ENCODE measurements at regions of chr10 and their contacts with region 1.

Region 1: GRCh38 chr10:6108603-6109443 is 20.0 kb downstream of the RBM17 start:
- DNase-seq: no peak
- H3K4me3 ChIP-seq: no peak overlapping the region
- H3K27ac ChIP-seq: peak overlapping the region in 1 of 2 donors; percentile 50
- H3K4me1 ChIP-seq: no peaks in the 10 kb centered on the region
- H3K27me3 ChIP-seq: no peaks in the 10 kb centered on the region
- CTCF ChIP-seq: peak; percentile 35 to 82 (median 75)
- POLR2A ChIP-seq: no peak

Region 2: DNA sequence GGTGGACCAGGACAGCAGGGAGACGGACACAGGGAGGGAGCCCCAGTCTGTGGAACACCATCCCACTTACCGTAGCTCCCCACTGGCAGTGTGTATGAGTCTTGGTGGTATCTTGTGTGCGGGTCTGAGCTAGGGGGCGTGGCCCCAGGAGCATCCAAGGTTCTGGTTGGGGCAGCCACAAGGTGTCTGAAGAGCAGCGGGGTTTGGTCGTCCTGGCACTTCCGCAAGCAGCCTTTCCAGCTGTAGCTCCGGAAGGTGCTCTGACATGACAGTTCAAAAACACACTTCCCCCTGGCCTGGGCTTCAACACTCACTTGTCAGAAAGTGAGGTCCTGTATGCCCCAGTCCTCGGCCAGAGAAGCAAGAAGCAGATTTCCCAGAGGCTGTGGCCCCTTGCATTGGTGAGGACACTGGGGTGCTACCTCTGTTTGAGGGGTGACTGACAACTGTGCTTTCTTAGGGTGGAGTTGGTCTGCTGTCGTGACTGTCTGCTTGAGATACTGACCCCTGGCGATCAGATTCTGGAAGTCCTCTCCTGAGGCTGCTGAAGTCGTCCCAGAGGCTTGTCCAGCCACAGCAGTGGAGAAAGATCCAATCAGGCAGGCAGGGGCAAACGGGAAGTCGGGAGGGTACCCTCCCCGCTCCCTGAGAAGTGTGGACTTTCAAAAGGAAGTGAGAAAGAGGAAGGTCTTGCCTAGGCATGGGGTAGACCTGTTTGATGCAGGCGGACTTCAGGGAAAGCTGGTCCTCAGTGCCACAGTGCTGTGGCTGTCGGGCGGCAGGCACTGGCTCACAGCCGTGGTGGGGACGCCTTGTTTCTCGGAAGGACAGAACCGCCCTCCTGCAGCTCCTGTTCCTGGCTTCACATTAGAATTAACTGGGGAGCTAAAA is 42.5 kb after region 1 on chr10:
- intact Hi-C with region 1: loop called (anchors 2 kb)
- DNase-seq: peak; percentile 55
- H3K4me3 ChIP-seq: no peak overlapping the region
- H3K27ac ChIP-seq: no peak overlapping the region
- H3K4me1 ChIP-seq: no peaks in the 10 kb centered on the region
- H3K27me3 ChIP-seq: no peaks in the 10 kb centered on the region
- CTCF ChIP-seq: peak in 3 of 4 experiments; percentile 50 to 65 (median 61)
- POLR2A ChIP-seq: no peak

Region 3: GRCh38 chr10:6171881-6172695 is 63.3 kb after region 1 on chr10:
- intact Hi-C with region 1: no loop called
- DNase-seq: no peak
- H3K4me3 ChIP-seq: no peak overlapping the region
- H3K27ac ChIP-seq: no peak overlapping the region
- H3K4me1 ChIP-seq: no peaks in the 10 kb centered on the region
- H3K27me3 ChIP-seq: no peaks in the 10 kb centered on the region
- CTCF ChIP-seq: no peak
- POLR2A ChIP-seq: no peak

Region 4: DNA sequence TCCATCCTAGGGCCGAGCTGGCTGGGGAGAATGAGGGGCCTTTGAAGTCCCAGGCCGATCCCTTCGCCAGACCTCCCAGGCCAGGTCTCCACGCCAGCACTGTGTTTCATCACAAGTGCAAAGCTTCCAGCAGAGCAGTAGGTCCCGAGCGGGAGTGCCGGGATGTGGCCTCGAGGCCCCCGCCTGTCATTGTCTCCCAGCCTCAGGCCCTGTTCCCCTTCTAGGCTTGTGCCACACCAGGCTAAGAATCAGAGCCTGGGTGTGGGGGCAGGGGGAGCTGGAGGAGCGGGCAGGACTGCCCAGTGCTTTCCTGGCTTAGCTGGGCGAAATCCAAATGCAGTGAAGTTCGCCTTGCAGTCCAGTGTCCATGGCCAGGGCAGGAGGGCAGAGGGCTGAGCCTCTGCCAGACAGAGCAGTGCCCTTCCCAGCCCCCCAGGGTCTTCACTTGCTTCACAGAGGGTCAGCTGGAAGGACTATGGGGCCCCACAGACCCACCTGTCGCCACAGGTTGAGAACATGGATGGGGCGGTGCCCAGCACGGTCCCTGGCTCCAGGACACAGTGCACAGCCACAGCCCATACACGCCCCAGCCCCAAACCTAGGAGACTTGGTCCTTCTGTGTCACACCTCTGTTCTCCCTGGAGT is 73.8 kb after region 1 on chr10:
- intact Hi-C with region 1: no loop called
- DNase-seq: no peak
- H3K4me3 ChIP-seq: no peak overlapping the region
- H3K27ac ChIP-seq: no peak overlapping the region
- H3K4me1 ChIP-seq: no peaks in the 10 kb centered on the region
- H3K27me3 ChIP-seq: no peaks in the 10 kb centered on the region
- CTCF ChIP-seq: no peak
- POLR2A ChIP-seq: no peak

Region 5: GRCh38 chr10:6401562-6402348 is 292.9 kb after region 1 on chr10:
- intact Hi-C with region 1: loop called (anchors 2 kb)
- DNase-seq: peak; percentile 80
- H3K4me3 ChIP-seq: peak overlapping the region; percentile 5 to 21
- H3K27ac ChIP-seq: peak overlapping the region; percentile 25 to 40
- H3K4me1 ChIP-seq: no peaks in the 10 kb centered on the region
- H3K27me3 ChIP-seq: no peaks in the 10 kb centered on the region
- CTCF ChIP-seq: peak; percentile 21 to 92 (median 82)
- POLR2A ChIP-seq: no peak

Region 6: GRCh38 chr10:6537770-6538169 is 428.9 kb after region 1 on chr10:
- intact Hi-C with region 1: no loop called
- DNase-seq: no peak
- H3K4me3 ChIP-seq: no peak overlapping the region
- H3K27ac ChIP-seq: no peak overlapping the region
- H3K4me1 ChIP-seq: no peaks in the 10 kb centered on the region
- H3K27me3 ChIP-seq: no peaks in the 10 kb centered on the region
- CTCF ChIP-seq: no peak
- POLR2A ChIP-seq: no peak